ENCODE measurements at regions of chr5 and their contacts with region 1.

Region 1: DNA sequence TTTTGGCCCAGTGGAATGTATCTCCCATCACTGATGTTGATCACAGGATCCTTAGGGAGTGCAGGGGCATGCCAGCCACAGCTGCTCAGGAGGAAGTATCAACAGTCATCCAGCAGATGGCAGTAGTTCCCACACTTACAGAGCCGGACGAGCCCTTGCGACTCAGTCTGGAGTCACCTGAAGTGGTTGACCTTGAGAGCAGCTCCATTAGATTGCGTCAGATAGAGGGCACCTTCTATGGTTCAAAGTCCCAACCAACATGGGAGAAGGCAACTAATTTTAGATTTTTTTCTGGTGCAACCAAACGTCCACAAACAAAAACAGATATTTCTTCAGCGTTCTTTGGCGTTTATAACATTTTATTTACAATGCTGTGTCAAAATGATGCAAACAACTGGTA is 124.5 kb downstream of the EGFLAM start:
- DNase-seq: peak; percentile 69 to 78
- H3K4me3 ChIP-seq: no peak overlapping the region
- H3K27ac ChIP-seq: no peak overlapping the region
- H3K4me1 ChIP-seq: peaks cover 0 to 12% (median 7%) of the 10 kb centered on the region in 4 experiments; a peak in 3 of 7 replicates
- H3K27me3 ChIP-seq: peaks cover 0 to 3% (median 0%) of the 10 kb centered on the region in 4 experiments; a peak in 1 of 7 replicates
- CTCF ChIP-seq: peak; percentile 84 to 94 (median 89)
- EP300 ChIP-seq: no peak
- POLR2A ChIP-seq: no peak
- RAD21 ChIP-seq: peak; percentile 80 to 93

Region 2: GRCh38 chr5:38369692-38370091 is 13.2 kb before region 1 on chr5:
- CTCF ChIA-PET with region 1: interaction called, 14 read pairs
- POLR2A ChIA-PET with region 1: no interaction called
- DNase-seq: no peak
- H3K4me3 ChIP-seq: no peak overlapping the region
- H3K27ac ChIP-seq: no peak overlapping the region
- H3K4me1 ChIP-seq: no peaks in the 10 kb centered on the region
- H3K27me3 ChIP-seq: no peaks in the 10 kb centered on the region
- CTCF ChIP-seq: no peak
- EP300 ChIP-seq: no peak
- POLR2A ChIP-seq: no peak
- RAD21 ChIP-seq: no peak

Region 3: GRCh38 chr5:38404667-38405276 is 21.9 kb after region 1 on chr5:
- CTCF ChIA-PET with region 1: interaction called, 22 read pairs
- POLR2A ChIA-PET with region 1: no interaction called
- DNase-seq: peak in 1 of 2 experiments; percentile 61
- H3K4me3 ChIP-seq: no peak overlapping the region
- H3K27ac ChIP-seq: no peak overlapping the region
- H3K4me1 ChIP-seq: no peaks in the 10 kb centered on the region
- H3K27me3 ChIP-seq: no peaks in the 10 kb centered on the region
- CTCF ChIP-seq: peak; percentile 67 to 80 (median 80)
- EP300 ChIP-seq: no peak
- POLR2A ChIP-seq: no peak
- RAD21 ChIP-seq: peak; percentile 78 to 80

Region 4: DNA sequence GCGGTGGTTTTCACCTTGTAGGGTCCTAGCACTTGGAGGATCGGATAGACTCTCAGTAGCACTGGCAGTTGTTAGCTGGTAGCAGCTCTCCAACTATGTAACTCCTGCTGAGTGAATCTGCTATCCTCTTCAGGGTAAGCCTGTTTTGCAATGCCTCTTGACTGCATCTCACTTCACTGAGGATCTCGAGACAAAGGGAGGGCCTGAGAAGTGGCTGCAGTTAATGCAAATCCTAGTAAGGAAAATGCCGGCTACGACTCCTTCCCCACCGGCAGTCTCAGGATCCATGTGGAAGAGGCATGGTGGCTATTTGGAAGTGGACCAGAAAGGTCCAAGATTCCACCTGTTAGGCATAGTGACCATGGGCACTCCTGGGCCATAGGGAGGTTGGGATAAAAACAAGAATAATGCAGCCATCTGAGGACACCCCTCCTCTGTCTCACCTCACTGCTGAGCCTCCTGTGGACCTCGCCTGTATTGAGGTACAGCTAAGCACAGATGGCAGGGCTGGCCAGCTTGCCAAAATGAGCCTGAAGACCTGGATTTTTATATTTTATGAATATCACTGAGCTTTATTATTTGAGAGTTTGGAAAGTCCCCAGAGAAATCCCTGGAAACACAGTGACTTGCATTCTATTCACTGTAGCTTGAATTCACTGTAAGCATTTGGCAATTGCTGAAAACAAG is 27.5 kb after region 1 on chr5:
- CTCF ChIA-PET with region 1: interaction called, 16 read pairs
- POLR2A ChIA-PET with region 1: no interaction called
- DNase-seq: no peak
- H3K4me3 ChIP-seq: no peak overlapping the region
- H3K27ac ChIP-seq: no peak overlapping the region
- H3K4me1 ChIP-seq: peaks cover 0 to 2% (median 0%) of the 10 kb centered on the region in 4 experiments; a peak in 1 of 7 replicates
- H3K27me3 ChIP-seq: no peaks in the 10 kb centered on the region
- CTCF ChIP-seq: no peak
- EP300 ChIP-seq: no peak
- POLR2A ChIP-seq: no peak
- RAD21 ChIP-seq: no peak

Measured in H1 (cell line).